Dendritic cell treated with granulocyte-macrophage colony-stimulating factor and Interleukin-4, amounts not matched to agents 40 ng/mL and 50 ng/mL, for 4 days (primary cell): ENCODE measurements at regions of chr16 and their contacts with region 1.

Region 1: GRCh38 chr16:2867987-2868789 is 10.2 kb upstream of the PRSS22 start:
- H3K4me3 Mint-ChIP-seq: peak overlapping the region; percentile 95
- H3K27ac Mint-ChIP-seq: peak overlapping the region; percentile 92
- H3K4me1 Mint-ChIP-seq: no peaks in the 10 kb centered on the region
- H3K27me3 Mint-ChIP-seq: peaks cover 2% of the 10 kb centered on the region

Region 2: DNA sequence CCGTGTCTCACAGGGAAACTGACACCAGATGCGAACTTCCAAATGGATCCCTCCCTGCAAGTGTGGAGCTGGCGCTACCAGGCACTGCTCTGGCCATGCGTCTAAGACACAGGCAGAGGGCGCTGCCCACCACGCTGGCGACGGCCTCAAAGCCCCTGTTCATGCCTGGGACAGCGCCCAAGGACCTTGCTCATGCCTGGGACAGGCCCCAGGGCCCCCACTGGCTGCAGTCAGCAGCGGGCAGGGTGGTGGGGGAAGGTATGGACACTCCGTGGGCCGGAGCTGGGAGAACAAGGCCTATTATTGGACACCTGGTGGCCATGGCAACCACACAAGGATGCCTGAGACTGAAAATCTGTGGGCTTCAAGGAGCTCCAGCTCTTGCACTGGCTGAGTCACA is 29.3 kb before region 1 on chr16:
- intact Hi-C with region 1: loop called (anchors 1 kb)
- H3K4me3 Mint-ChIP-seq: no peak overlapping the region
- H3K27ac Mint-ChIP-seq: no peak overlapping the region
- H3K4me1 Mint-ChIP-seq: peaks cover 34% of the 10 kb centered on the region
- H3K27me3 Mint-ChIP-seq: peaks cover 32% of the 10 kb centered on the region